ENCODE measurements at regions of chr10 and their contacts with region 1.

Region 1: GRCh38 chr10:131885391-131886161 is 15.2 kb upstream of the PPP2R2D start:
- DNase-seq: peak; percentile 32 to 82 (median 66)
- H3K4me3 ChIP-seq: peak overlapping the region in 6 of 59 donors; percentile 4 to 27 (median 20)
- H3K27ac ChIP-seq: no peak overlapping the region
- H3K27me3 ChIP-seq: peaks cover 0 to 8% (median 0%) of the 10 kb centered on the region in 45 donors
- CTCF ChIP-seq: peak; percentile 67 to 99 (median 95)

Region 2: DNA sequence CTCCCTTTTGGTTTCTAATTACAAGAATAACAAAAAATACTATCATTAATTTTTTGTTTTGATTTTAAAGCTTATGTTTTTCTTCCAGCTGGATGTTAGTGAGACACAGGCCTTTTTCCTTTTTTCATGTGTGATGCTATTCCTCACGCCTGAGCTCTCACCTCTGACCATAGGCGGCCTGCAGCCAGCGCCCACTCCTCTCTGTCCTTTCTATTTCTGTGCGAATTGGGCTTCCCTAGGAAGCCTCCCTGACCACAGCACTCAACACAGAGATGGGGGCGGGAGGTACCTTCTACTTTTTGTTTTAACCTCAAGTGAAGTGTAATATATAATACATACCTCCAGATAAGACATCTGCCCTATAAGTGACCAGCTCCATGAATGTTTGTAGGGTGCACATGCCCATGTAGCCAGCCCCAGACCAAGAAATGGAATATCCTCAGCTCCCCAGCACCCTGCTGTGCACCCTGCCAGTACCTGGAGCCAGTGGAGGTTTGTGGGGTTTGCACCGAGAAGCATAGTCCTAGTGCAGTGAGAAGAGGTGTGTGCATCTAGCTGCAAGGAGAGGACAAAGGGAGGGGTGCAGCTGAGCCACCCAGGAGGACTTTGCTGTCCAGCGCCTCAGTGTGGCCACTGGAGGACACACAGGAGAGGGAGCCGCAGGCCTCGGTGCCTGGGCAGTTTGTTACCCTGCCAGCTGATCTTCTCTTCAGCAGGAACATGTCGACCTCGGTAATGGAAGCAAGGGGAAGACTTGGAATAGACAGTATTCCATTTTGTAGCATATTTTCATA is 57.6 kb after region 1 on chr10:
- intact Hi-C with region 1: loop called in 1 of 2 experiments (anchors 2 kb)
- DNase-seq: peak in 1 of 10 donors; percentile 50
- H3K4me3 ChIP-seq: no peak overlapping the region
- H3K27ac ChIP-seq: peak overlapping the region in 5 of 59 donors; percentile 3 to 27 (median 10)
- H3K27me3 ChIP-seq: no peaks in the 10 kb centered on the region
- CTCF ChIP-seq: peak in 51 of 56 donors; percentile 16 to 67 (median 41)